ENCODE measurements at regions of chr7 and their contacts with region 1.

Region 1: DNA sequence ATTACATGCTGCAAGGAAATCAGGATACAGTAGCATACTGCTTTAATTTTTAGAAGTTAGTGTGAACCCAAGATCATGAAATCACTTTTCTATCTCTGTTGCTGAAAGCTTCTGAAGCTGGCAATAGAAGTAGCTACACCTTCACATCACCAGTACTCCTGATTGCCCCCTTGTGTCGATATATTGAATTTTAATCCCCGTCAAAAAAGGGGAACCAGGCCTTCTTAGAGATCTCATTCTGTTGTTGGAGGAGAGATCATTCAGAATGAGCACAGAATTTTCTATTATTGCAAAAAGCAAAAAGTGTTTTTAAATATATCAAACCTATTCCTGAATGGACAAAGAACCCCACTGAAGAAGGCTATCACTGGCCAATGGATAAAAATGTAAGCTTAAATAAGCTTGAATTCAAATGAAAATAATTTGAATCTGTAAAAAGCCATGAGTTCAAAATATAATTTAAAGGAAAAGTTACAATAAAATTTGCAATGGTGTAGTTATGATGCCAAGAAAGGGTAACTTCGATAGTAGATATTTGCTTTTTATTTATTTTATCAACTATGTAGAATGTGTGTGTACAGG is 39.7 kb upstream of the TEX47 start:
- DNase-seq: peak; percentile 23
- CTCF ChIP-seq: peak; percentile 35

Region 2: DNA sequence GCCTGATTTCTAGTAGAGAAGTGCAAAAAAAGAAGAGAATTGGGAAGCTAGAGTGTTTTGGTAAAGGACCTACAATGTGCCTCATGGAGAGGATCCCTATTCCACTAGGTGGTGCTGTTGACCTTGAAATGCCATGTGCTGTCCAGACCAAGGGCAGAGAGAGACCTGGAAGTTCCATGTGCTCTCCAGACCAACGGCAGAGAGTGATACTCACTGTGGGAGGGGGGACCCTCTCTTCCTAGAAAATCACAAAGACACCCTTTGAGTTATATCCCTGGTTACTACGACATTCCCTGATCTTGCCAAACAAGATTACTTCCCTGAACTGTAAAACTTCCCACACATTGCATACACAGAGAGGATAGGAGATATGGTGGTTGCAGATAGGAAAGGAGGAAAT is 288.4 kb before region 1 on chr7:
- in situ Hi-C with region 1: loop called (anchors 25 kb)
- DNase-seq: peak; percentile 11
- CTCF ChIP-seq: peak; percentile 64

Region 3: GRCh38 chr7:89001306-89001705 is 166.1 kb after region 1 on chr7:
- in situ Hi-C with region 1: no loop called
- DNase-seq: no peak
- CTCF ChIP-seq: no peak